ENCODE measurements at regions of chr1 and their contacts with region 1.

Region 1: GRCh38 chr1:64823691-64824476 is 79.0 kb downstream of the RAVER2 start:
- DNase-seq: no peak

Region 2: DNA sequence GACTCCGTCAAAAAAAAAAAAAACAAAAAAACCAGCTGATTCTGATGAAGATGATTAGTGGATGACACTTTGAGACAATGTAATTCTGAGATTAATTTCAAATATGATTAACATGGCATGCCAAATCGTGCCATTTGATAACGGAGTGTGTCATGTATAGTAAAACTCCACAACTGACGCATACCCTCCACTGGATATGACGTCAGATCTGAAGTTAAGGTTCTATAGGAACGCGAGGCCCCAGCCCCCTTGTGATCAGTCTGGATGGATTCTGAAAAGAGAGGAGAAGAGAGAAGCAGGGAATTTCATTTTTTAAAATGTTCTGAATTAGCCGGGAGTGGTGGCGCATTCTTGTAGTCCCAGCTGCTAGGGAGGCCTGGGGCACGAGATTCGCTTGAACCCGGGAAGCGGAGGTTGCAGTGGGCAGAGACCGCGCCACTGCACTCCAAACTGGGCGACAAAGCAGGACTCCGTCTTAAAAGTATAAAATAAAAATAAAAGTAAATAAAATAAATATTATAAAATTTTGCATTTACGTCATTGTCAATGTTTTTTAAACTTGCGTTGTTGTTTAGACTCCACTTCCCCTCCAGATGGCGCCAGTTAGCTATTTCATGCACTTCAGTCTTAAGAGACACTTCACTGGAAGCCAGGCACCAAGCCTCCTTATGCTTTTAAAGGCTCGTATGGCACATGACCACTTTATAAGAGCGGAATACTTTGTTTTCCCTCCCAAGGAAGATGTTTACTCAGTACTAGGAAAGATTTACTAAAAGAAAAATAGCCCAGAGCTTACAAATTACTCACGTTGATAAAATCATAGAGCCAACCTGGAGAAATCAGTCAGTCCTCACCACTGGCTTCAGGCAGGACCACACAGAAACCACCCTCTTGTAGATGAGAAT is 555.0 kb before region 1 on chr1:
- intact Hi-C with region 1: loop called in 1 of 2 experiments (anchors 5 kb)
- DNase-seq: no peak

Region 3: GRCh38 chr1:64686828-64687724 is 136.8 kb before region 1 on chr1:
- intact Hi-C with region 1: loop called in 1 of 2 experiments (anchors 10 kb)
- DNase-seq: no peak